ENCODE measurements at regions of chr6 and their contacts with region 1.

Region 1: DNA sequence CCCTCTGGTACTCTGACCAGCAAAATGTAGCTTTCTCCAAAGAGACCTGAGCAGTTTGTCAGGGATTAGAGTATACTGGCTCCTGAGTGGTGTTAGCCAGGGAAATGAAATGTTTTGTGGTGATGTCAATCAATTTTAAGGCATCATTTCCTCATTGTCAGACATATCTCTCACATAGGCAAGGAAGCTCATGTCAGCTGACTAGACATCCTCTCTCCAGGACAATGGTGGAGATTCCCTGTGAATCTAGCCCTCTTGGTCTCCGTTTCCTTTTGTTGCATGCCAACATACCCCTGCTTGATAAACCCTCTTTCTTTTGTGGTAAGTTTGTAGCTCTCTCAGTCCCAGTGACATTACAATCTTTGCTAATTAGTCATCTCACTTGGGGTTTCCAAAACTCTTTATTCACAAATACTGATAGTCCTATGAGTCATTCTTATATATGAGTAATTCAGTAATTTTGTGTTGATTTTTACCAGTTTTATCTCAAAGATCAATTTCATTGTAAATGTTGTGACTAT is 135.6 kb upstream of the PTPRK start:
- DNase-seq: peak; percentile 93
- H3K4me3 ChIP-seq: no peak overlapping the region
- H3K27ac ChIP-seq: peak overlapping the region; percentile 92
- H3K4me1 ChIP-seq: peaks cover 23% of the 10 kb centered on the region
- H3K27me3 ChIP-seq: no peaks in the 10 kb centered on the region
- CTCF ChIP-seq: no peak
- POLR2A ChIP-seq: peak; percentile 15

Region 2: DNA sequence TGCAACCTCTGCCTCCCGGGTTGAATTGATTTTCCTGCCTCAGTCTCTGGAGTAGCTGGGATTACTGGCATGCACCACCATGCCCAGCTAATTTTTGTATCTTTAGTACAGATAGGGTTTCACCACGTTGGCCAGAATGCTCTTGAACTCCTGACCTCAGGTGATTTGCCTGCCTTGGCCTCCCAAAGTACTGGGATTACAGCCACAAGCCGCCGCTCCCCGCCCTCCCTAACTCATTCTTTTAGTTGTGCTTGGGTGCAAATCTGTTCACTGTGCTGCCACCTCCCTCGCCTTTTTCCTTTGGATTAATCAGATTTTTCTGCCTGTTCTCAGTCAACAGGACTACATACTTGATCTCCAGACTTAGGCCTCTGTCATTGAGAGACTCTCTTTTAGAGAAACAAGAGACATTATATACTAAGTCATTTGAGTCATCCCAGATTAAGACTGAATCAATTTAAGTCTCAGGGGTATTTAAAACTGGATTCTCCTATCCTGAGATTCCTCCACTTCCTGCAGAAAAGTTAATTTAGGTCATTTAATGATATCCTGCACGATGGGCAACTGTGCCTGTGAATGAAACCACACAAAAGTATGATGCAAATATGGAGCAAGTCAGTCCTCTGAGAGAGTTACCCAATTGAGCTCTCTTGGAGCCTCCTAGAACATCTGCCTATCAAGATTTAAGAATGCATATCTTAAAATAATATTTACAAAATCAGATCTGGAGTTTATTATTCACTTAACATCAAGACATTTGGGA is 619.0 kb before region 1 on chr6:
- CTCF ChIA-PET with region 1: no interaction called
- POLR2A ChIA-PET with region 1: no interaction called
- dilution Hi-C with region 1: no loop called
- intact Hi-C with region 1: no loop called
- DNase-seq: no peak
- H3K4me3 ChIP-seq: no peak overlapping the region
- H3K27ac ChIP-seq: no peak overlapping the region
- H3K4me1 ChIP-seq: no peaks in the 10 kb centered on the region
- H3K27me3 ChIP-seq: no peaks in the 10 kb centered on the region
- CTCF ChIP-seq: no peak
- POLR2A ChIP-seq: no peak

Region 3: GRCh38 chr6:128339635-128340450 is 316.2 kb before region 1 on chr6:
- CTCF ChIA-PET with region 1: no interaction called
- POLR2A ChIA-PET with region 1: no interaction called
- dilution Hi-C with region 1: no loop called
- intact Hi-C with region 1: loop called (anchors 10 kb)
- DNase-seq: no peak
- H3K4me3 ChIP-seq: no peak overlapping the region
- H3K27ac ChIP-seq: no peak overlapping the region
- H3K4me1 ChIP-seq: no peaks in the 10 kb centered on the region
- H3K27me3 ChIP-seq: no peaks in the 10 kb centered on the region
- CTCF ChIP-seq: no peak
- POLR2A ChIP-seq: no peak

Region 4: DNA sequence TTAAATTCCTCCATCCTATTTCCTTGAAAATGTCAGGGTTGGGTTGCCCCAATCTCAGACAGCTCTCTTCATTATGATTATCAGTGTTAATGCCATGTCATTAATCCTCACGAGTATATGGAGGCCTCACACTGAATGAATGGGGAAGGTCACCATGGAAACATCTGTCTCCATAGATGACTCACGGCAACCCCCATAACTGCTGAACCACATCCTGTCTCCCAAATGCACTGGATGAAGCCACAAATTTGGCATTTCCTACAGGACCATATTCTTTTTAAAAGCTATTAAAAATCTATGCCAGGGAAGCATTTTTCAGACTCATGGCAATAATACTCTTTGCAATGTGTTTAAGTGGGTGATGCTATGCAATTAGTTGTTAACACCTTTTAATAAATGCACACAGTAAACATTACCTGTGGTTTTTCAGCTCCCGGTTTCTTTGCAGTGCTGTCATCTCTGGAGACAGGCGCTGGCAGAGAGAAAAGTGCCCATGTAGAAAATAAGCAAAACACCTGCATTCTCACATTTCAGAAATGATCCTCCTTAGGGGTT is 55.6 kb before region 1 on chr6:
- CTCF ChIA-PET with region 1: interaction called, 6 read pairs
- POLR2A ChIA-PET with region 1: no interaction called
- dilution Hi-C with region 1: no loop called
- intact Hi-C with region 1: loop called (anchors 1 kb)
- DNase-seq: peak; percentile 83
- H3K4me3 ChIP-seq: no peak overlapping the region
- H3K27ac ChIP-seq: peak overlapping the region; percentile 67
- H3K4me1 ChIP-seq: peaks cover 22% of the 10 kb centered on the region
- H3K27me3 ChIP-seq: no peaks in the 10 kb centered on the region
- CTCF ChIP-seq: no peak
- POLR2A ChIP-seq: no peak

Region 5: DNA sequence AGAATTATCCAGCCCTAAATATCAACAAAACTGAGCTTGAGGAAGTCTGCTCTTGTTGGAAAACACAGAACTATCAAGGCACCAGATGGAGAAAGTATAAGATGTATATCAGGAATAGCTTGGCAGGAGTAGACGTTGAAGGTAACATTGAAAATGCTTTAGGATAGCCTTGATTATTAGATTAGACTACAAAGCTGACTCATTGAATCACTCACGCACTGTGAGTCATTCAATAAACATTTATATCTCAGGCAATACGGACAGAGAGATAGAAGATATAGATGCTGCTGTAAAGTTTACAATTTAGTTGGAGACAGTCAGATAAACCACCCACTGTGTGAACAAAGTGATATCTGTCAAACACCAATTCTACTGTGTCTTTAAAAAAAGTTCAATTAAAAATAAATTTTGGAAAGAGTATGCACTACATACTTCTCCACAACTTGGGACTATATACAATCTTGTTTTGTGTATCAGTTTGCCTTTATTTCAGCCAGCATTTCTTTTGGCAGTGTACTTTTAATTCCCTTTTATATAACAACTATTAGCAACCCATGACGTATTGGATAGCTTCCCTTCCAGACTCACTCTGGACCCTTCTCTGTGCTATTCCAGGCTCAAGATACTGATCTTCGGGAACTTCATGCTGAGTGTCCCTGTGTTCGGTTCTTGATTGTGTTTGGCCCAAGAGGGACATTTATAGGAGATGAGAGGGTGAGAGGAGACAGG is 40.8 kb after region 1 on chr6:
- CTCF ChIA-PET with region 1: interaction called, 7 read pairs
- POLR2A ChIA-PET with region 1: no interaction called
- dilution Hi-C with region 1: no loop called
- intact Hi-C with region 1: loop called (anchors 1 kb)
- DNase-seq: peak; percentile 83
- H3K4me3 ChIP-seq: no peak overlapping the region
- H3K27ac ChIP-seq: peak overlapping the region; percentile 60
- H3K4me1 ChIP-seq: peaks cover 34% of the 10 kb centered on the region
- H3K27me3 ChIP-seq: no peaks in the 10 kb centered on the region
- CTCF ChIP-seq: no peak
- POLR2A ChIP-seq: no peak

Region 6: GRCh38 chr6:129110690-129111343 is 454.8 kb after region 1 on chr6:
- CTCF ChIA-PET with region 1: no interaction called
- POLR2A ChIA-PET with region 1: no interaction called
- dilution Hi-C with region 1: no loop called
- intact Hi-C with region 1: no loop called
- DNase-seq: no peak
- H3K4me3 ChIP-seq: no peak overlapping the region
- H3K27ac ChIP-seq: no peak overlapping the region
- H3K4me1 ChIP-seq: no peaks in the 10 kb centered on the region
- H3K27me3 ChIP-seq: no peaks in the 10 kb centered on the region
- CTCF ChIP-seq: no peak
- POLR2A ChIP-seq: no peak